HAP-1 (cell line): ENCODE measurements at regions of chr3 and their contacts with region 1.

Region 1: DNA sequence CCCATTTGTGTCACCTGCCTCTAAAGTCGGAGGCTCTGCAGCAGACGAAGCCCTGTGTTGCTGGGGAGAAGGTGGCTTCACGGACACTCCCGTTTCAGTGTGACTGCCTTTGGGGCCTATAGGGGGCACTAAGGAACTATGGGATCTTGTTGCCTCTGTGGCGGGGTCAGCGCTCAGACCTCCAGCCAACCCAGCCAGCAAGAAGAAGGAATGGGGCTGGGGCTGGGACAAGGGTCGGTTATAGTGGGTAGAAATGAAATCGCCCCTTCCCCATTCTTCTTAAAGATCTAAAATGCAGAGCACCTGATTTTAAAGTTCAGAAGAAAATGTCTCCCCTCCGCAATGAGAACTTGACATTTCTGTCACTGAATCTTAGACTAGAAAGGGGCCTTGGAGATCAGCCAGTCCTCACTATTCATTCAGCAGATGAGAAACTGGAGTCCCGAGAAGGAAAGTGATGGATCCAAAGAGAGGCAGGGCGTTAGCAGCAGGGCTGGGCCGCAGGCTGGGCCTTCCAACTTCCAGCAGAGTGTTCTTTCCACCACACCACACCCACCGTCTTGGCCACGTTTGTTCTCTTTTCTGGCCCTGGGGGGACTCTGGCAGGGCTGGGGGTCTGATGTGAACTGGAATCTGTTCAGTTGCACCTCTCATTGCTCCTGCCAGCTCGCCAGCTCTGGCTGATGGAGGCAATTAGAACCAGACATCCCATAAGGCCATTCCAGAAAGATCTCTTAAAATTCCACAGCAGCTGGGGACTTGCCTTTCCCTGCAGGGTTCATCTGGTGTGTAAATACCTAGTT is 195.4 kb downstream of the OPA1 start:
- DNase-seq: peak; percentile 73 to 75
- H3K4me3 ChIP-seq: no peak overlapping the region
- H3K4me1 ChIP-seq: peaks cover 3% of the 10 kb centered on the region; the same call in 1 of the 2 replicates
- H3K27me3 ChIP-seq: no peaks in the 10 kb centered on the region

Region 2: DNA sequence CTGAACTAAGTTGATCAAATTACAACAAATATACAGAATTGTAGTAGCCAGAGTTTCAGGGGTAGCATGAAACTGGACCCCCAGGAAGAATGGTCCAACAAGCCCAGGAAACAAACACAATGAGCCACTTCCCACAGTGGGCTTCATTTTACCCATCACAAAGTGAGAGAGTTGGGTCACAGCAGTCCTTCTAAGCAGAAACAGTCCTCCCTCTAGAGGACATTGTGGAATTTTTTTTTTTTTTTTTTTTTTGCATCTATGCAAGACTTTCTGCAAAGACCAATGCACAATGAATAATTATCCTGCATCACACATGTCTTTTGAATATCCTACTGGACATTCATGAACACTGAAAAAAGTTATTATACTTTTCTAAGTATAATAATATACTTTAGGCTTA is 336.1 kb before region 1 on chr3:
- in situ Hi-C with region 1: no loop called
- DNase-seq: peak in 1 of 2 experiments; percentile 10
- H3K4me3 ChIP-seq: no peak overlapping the region
- H3K4me1 ChIP-seq: no peaks in the 10 kb centered on the region
- H3K27me3 ChIP-seq: no peaks in the 10 kb centered on the region

Region 3: DNA sequence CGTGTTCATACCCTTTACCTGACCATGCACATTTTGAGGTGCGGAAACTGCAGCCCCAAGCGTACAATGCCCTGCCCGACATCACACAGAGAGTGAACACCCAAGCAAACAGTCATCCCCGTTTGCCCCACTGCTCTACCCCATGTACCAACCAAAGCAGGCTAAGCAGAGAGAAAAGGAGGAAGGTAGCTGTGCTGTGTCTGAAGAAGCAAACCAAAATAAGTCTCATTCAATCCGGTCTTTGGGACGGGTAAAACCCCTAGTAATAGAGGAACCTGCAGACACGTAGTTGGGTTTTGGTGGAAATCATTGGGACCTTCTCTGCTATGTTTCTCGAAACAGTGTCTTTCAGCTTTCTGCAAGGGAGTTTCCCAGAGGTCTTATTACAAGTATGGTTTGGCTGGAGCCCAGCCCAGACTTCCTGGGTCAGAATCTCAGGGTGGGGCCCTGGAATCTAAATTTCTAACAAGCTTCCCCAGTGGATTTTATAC is 182.9 kb after region 1 on chr3:
- in situ Hi-C with region 1: loop called (anchors 25 kb)
- DNase-seq: no peak
- H3K4me3 ChIP-seq: no peak overlapping the region
- H3K4me1 ChIP-seq: peaks cover 13% of the 10 kb centered on the region
- H3K27me3 ChIP-seq: no peaks in the 10 kb centered on the region

Region 4: DNA sequence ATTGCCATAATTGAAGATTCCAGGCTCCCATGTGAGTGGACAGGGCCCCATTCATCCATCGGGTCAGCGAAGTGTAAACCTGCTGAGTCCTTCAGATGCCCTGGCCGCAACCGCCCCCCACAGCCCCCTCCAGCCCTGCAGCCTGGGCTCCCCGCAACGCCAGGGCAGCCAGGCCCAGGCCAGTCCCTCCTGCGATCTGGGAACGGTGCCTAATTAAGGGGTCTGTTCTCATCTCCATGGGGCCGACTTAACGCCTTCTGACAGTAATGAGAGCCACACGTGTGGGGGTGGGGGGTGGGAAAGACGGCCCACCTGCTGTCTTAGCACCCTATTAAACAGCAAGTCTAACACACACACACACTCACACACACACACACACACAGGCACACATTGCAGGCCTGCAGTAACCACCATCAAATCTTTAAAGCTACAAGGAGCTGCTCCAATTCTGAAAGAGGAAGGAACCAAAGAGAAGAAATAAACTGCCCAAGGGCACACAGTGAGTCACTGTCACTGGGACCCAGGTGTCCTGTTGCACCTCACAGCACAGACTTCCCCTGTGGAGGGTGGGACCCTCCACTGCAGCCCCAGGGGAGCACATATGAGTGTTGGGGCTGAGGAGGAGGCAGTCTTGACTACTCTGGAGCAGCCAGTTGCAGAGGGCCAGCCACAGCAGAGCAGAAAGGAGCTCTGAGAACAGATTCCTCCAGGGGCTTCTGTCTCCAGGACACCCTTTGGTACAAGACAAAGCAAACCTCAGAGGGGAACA is 315.8 kb after region 1 on chr3:
- in situ Hi-C with region 1: no loop called
- DNase-seq: no peak
- H3K4me3 ChIP-seq: no peak overlapping the region
- H3K4me1 ChIP-seq: peaks cover 11% of the 10 kb centered on the region
- H3K27me3 ChIP-seq: no peaks in the 10 kb centered on the region

Region 5: DNA sequence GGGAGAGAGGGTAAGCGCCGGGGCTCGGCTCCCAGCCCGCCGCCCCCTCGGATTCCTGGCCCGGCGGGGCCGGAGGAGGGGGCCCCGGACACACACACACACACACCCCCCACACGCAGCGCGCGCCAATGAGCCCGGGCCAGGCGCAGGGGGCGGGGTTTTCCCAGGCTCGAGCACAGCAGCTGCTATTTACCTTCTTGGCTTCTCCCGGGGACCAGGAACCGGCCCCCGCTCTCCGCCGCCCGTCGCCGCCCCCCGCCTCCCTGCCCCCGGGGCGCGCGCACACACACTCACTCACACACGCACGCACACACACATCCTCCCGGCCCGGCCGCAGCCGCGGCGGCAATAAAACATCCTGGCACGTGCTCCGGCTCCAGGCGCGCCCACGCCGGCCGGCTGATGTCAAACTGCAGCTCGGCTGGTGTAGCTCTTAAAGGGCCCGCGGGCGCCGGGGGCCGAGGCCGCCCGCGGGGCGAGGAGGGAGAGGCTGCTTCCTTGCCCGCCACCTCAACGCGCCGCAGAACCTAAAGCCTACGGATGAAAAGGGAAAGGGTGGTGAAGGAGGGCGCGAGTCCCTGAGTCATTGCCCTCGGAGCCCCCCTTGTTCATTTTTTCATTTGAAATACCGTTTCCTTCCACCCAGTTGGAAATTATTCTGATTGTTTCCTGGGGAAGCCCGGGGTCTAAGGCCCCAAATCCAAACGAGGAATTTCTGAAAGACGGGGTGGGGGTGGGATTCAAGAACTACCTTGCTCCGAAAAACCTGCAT is 346.6 kb after region 1 on chr3:
- in situ Hi-C with region 1: loop called (anchors 5 kb)
- DNase-seq: peak; percentile 90 to 96
- H3K4me3 ChIP-seq: peak overlapping the region; percentile 48
- H3K4me1 ChIP-seq: peaks cover 51% of the 10 kb centered on the region
- H3K27me3 ChIP-seq: no peaks in the 10 kb centered on the region